HEK293T (cell line): ENCODE measurements at regions of chr7 and their contacts with region 1.

Region 1: GRCh38 chr7:101244375-101245146 is at the start of gene FIS1:
- DNase-seq: peak; percentile 83

Region 2: GRCh38 chr7:101205901-101206664 is 38.5 kb before region 1 on chr7:
- CTCF ChIA-PET with region 1: no interaction called
- POLR2A ChIA-PET with region 1: no interaction called
- DNase-seq: no peak

Region 3: DNA sequence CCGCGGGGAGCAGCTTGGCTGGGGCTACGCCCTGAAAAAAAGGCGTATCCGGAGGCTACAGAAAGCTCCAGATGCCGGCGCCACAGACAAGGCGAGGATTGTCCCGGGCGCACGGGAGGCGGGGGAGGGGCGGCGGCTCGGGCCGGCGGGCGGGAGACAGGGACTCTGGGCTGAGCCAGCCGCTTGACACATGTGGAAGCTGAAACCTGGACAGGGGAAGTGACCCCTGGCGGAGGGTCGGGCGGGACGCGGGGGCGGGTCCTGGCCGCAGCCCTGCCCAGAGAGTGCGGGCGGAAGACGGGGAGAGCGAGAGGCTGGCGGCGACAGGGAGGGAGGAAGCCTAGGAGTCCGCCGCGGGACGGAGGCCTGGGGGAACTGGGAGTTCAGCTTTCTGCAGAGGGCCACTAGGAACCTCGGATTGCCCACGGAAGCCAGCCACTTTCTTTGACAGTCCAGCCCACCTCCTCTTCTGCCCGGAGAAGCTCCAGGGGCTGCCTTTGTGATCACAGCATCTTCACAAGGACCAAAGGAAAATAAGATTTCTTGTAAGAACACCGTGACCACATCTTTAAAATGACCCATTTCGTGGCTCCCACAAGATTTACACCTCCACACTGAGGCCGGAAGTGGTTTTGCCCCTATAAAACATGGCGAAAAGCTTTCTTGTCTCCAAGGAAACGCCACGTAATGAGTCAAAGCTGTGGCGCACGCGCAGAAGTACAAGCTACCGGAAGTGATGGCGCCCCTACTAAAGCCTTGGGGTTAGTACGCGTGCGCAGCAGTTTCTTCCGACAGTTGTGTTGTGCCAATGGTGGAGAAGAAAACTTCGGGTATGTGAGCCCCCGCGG is 26.9 kb before region 1 on chr7 and contains the starts of genes PLOD3 and ZNHIT1:
- CTCF ChIA-PET with region 1: interaction called, 7 read pairs
- POLR2A ChIA-PET with region 1: interaction called, 38 read pairs
- DNase-seq: peak; percentile 98

Region 4: DNA sequence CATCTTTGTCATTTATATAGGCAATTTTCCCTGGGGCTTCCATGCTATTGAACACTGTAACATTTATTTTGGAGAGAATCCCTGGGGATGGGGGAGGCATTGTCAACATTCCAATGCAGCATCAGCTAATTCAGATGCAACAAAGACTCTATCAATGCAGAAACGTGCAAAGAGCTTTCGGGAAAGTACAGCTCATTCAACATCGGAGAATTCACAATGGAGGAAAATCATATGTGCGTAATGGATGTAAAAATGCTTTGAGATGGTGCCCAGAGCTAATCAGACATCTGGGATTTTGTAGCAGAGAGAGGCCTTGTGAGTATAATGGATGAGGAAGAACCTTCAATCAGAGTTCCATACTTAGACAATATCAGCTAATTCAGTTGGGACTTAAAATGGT is 28.6 kb after region 1 on chr7:
- CTCF ChIA-PET with region 1: no interaction called
- POLR2A ChIA-PET with region 1: no interaction called
- DNase-seq: no peak

Region 5: DNA sequence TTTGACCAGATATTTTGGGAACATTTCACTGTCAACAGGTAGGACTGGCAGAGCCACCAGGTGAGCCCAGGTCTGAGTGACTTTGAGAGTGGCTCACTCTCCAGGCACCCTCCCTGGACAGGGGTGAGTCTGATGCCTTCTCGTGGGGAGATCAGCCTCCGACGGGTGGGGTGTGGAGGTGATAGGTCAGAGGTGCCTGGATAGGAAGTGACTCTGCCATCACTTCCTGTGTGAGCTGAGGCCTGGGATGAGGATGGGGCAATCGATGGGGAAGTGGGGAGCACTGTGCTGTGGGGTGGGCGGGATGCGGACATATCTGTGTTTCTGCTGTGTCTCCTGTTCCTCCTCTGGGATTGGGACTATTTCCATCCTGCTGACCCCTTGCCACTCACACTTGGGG is 42.5 kb after region 1 on chr7:
- CTCF ChIA-PET with region 1: interaction called, 11 read pairs
- POLR2A ChIA-PET with region 1: interaction called, 8 read pairs
- DNase-seq: no peak